Pancreas (tissue), 10 donors: ENCODE measurements at regions of chr18 and their contacts with region 1.

Region 1: DNA sequence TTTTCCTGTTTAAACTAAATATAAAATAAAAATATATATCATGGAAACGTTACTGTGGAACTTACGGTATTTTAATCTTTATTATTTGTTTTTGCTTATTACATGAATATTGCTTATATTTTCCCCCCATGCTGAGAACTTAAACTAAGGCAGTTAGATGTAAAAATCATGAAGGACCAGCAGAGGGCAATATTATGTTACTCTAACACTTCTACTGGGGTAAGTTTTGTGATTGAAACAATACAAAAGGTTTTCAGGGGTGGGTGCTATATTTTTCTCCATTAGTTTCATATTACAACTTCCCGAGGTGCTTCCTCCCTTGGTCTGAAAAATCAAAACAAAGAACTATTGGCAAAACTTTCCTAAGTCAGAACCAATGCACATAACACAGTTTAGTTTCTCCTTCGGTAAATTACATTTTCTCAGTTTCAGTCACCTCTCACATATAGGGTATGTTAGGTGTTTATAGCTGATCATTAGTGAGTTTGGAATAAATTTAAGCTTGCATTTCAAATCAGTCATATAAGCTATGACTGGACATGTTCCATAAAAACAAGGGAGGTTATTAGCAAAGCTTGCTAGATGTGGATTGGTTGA is 54.8 kb downstream of the ZNF407 start:
- DNase-seq: no peak
- ATAC-seq: peak in 3 of 4 donors; percentile 44 to 58 (median 57)
- H3K4me3 ChIP-seq: no peak overlapping the region
- H3K27ac ChIP-seq: no peak overlapping the region
- H3K4me1 ChIP-seq: no peaks in the 10 kb centered on the region
- H3K27me3 ChIP-seq: no peaks in the 10 kb centered on the region
- CTCF ChIP-seq: peak in 3 of 4 donors; percentile 21 to 43 (median 32)

Region 2: DNA sequence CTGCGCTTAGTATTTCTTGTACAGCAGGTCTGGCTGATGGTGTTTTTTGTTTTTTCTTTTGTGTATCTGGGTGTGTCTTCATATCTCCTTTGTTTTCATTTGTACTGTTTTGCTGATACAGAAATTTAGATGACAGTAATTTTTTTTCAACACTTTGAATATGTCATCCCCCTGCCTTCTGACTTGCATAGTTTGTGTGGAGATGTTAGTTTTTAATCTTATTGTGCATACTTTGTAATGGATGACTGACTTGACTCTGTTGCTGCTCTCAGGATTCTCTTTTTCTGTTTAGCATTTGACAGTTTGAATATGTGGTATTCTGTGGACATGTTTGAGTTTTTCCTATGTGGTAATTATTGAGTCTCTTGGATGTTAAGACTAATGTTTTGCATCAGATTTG is 106.5 kb after region 1 on chr18:
- intact Hi-C with region 1: no loop called
- DNase-seq: no peak
- ATAC-seq: no peak
- H3K4me3 ChIP-seq: no peak overlapping the region
- H3K27ac ChIP-seq: no peak overlapping the region
- H3K4me1 ChIP-seq: no peaks in the 10 kb centered on the region
- H3K27me3 ChIP-seq: no peaks in the 10 kb centered on the region
- CTCF ChIP-seq: no peak

Region 3: GRCh38 chr18:76349067-76349715 is 1696.7 kb after region 1 on chr18:
- intact Hi-C with region 1: loop called in 1 of 3 experiments (anchors 10 kb)
- DNase-seq: peak in 5 of 6 donors; percentile 41 to 78 (median 57)
- ATAC-seq: peak; percentile 75 to 89 (median 84)
- H3K4me3 ChIP-seq: peak overlapping the region in 2 of 4 donors; percentile 23 to 39
- H3K27ac ChIP-seq: no peak overlapping the region
- H3K4me1 ChIP-seq: peaks cover 5 to 9% (median 7%) of the 10 kb centered on the region in 3 donors
- H3K27me3 ChIP-seq: no peaks in the 10 kb centered on the region
- CTCF ChIP-seq: peak; percentile 72 to 75 (median 73)